ENCODE measurements at regions of chr13 and their contacts with region 1.

Region 1: DNA sequence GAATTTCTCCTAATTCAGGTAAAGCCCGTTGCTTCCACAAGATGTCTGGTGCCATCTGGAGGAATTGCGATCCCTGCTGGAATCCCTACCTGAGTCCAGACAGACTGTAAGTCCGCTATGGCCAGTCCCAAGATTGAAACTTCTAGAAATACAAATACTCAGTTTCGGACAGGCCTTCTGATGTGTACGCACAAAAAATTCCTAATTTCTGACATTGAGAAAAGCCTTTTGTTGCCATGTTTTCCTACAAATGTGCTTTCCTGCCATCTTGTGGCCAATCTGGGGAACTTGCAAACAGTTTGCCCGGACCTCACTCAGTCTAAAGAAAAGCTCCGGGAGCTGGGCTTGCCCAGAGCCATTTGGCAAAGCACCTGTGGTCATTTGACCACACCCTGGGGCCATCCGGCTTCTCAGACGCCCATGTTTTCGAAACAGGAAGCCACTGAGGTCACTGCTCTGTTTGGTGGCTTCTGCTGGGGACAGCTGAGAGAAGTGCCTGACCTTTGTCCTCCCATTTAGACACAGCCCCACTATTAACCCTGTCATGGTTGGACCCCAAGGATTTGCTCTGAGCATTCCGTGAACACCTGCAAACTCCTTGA is 79.4 kb downstream of the SLC15A1 start:
- DNase-seq: peak; percentile 13
- ATAC-seq: peak; percentile 96
- H3K4me3 ChIP-seq: no peak overlapping the region
- H3K27ac ChIP-seq: no peak overlapping the region
- H3K4me1 ChIP-seq: no peaks in the 10 kb centered on the region
- H3K27me3 ChIP-seq: no peaks in the 10 kb centered on the region; a peak in 1 of 4 replicates
- CTCF ChIP-seq: peak; percentile 85 to 90 (median 86)
- EP300 ChIP-seq: no peak
- POLR2A ChIP-seq: no peak
- RAD21 ChIP-seq: peak; percentile 88

Region 2: GRCh38 chr13:98033277-98034247 is 639.5 kb before region 1 on chr13:
- CTCF ChIA-PET with region 1: interaction called, 7 read pairs
- POLR2A ChIA-PET with region 1: no interaction called
- RAD21 ChIA-PET with region 1: interaction called, 3 read pairs
- SMC1A ChIA-PET with region 1: interaction called, 4 read pairs
- in situ Hi-C with region 1: no loop called
- intact Hi-C with region 1: loop called (anchors 10 kb)
- DNase-seq: no peak
- ATAC-seq: no peak
- H3K4me3 ChIP-seq: no peak overlapping the region
- H3K27ac ChIP-seq: no peak overlapping the region
- H3K4me1 ChIP-seq: no peaks in the 10 kb centered on the region
- H3K27me3 ChIP-seq: no peaks in the 10 kb centered on the region
- CTCF ChIP-seq: peak in 1 of 3 experiments; percentile 16; a peak in 1 of 6 replicates
- EP300 ChIP-seq: no peak
- POLR2A ChIP-seq: no peak
- RAD21 ChIP-seq: peak; percentile 45

Region 3: DNA sequence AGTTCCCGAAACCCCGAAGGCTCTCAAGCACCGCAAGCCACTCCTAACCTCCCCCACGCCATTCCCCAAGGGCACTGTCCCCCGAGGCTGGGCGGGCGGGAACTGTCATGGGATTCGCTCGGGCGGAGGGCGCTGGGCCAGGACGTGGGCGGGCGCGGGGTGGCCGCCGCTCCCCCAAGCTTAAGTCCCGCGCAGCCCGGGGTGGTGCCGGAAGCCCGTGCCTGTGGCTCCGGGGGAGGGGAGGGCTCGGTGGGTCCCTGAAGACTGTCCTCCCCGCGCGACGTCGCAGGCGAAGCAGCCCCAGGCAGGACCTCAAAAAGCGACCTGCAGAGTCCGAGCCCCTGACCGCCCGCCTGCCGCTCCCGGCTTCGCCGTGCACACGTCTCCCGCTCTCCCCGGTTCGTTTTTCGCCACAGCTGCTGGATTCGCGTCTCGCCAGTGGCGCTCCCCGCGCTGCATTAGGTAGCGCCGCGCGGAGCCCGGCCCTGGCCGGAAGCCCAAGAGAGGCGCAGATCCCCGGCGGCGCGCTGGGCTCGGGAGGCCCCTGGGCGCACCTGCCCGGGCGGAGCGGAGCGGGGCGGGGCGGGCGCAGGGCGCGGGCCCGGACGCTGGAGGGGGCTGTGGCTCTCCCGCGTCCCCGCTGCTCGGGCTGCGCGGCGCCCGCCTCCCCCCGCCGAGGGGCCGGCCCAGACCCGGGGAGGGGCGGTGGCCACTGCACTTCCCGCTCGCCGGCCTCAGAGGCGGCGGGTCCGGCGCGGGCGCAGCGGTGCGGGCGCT is 530.5 kb before region 1 on chr13 and contains the start of gene FARP1:
- CTCF ChIA-PET with region 1: no interaction called
- POLR2A ChIA-PET with region 1: no interaction called
- RAD21 ChIA-PET with region 1: no interaction called
- SMC1A ChIA-PET with region 1: no interaction called
- in situ Hi-C with region 1: no loop called
- intact Hi-C with region 1: loop called (anchors 10 kb)
- DNase-seq: no peak
- ATAC-seq: peak; percentile 89
- H3K4me3 ChIP-seq: peak within 1 kb of the TSS; percentile 60; the same call in 1 of the 2 replicates
- H3K27ac ChIP-seq: no peak within 1 kb of the TSS
- H3K4me1 ChIP-seq: no peaks in the 10 kb centered on the region
- H3K27me3 ChIP-seq: peaks cover 4 to 7% of the 10 kb centered on the region in 2 experiments; a peak in 3 of 4 replicates
- CTCF ChIP-seq: peak in 2 of 3 experiments; percentile 13 to 45; a peak in 3 of 6 replicates
- EP300 ChIP-seq: no peak
- POLR2A ChIP-seq: no peak
- RAD21 ChIP-seq: no peak
- polyA plus RNA-seq, gene FARP1: 0.20 to 0.52 TPM

Region 4: DNA sequence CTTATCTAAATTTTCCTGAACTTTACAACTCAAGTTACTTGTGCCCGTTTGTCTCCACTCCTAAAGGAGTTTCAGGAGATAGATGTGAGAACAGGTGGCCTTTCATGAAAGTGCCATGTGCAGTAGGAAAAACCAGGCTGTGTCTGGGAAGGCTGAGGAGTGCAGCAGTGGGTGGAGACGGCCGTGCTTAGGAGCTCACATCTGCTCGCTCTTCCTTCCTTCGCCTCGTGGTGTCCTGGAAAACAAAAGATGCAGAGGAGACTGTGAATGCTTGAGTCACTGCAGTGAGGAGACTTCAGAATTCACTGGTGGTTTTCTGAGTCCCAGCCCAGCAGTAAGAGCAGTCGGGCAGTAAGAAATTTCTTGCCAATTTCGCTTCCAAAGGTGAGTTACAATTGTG is 357.6 kb before region 1 on chr13:
- CTCF ChIA-PET with region 1: no interaction called
- POLR2A ChIA-PET with region 1: no interaction called
- RAD21 ChIA-PET with region 1: no interaction called
- SMC1A ChIA-PET with region 1: no interaction called
- in situ Hi-C with region 1: no loop called
- intact Hi-C with region 1: no loop called
- DNase-seq: no peak
- ATAC-seq: no peak
- H3K4me3 ChIP-seq: no peak overlapping the region
- H3K27ac ChIP-seq: no peak overlapping the region
- H3K4me1 ChIP-seq: no peaks in the 10 kb centered on the region
- H3K27me3 ChIP-seq: no peaks in the 10 kb centered on the region
- CTCF ChIP-seq: no peak
- EP300 ChIP-seq: no peak
- POLR2A ChIP-seq: no peak
- RAD21 ChIP-seq: no peak

Region 5: GRCh38 chr13:98445340-98446233 is 227.5 kb before region 1 on chr13:
- CTCF ChIA-PET with region 1: interaction called, 45 read pairs
- POLR2A ChIA-PET with region 1: no interaction called
- RAD21 ChIA-PET with region 1: interaction called, 12 read pairs
- SMC1A ChIA-PET with region 1: interaction called, 27 read pairs
- in situ Hi-C with region 1: no loop called
- intact Hi-C with region 1: loop called (anchors 1 kb)
- DNase-seq: peak; percentile 17
- ATAC-seq: peak; percentile 97
- H3K4me3 ChIP-seq: no peak overlapping the region
- H3K27ac ChIP-seq: peak overlapping the region; percentile 53
- H3K4me1 ChIP-seq: peaks cover 6% of the 10 kb centered on the region
- H3K27me3 ChIP-seq: no peaks in the 10 kb centered on the region
- CTCF ChIP-seq: peak; percentile 90 to 100 (median 98); a peak in 5 of 6 replicates
- EP300 ChIP-seq: no peak
- POLR2A ChIP-seq: no peak; the same call in 1 of the 2 replicates
- RAD21 ChIP-seq: peak; percentile 93

Region 6: GRCh38 chr13:98942997-98943396 is 270.0 kb after region 1 on chr13:
- CTCF ChIA-PET with region 1: no interaction called
- POLR2A ChIA-PET with region 1: no interaction called
- RAD21 ChIA-PET with region 1: no interaction called
- SMC1A ChIA-PET with region 1: no interaction called
- in situ Hi-C with region 1: no loop called
- intact Hi-C with region 1: no loop called
- DNase-seq: no peak
- ATAC-seq: no peak
- H3K4me3 ChIP-seq: no peak overlapping the region
- H3K27ac ChIP-seq: no peak overlapping the region
- H3K4me1 ChIP-seq: no peaks in the 10 kb centered on the region
- H3K27me3 ChIP-seq: no peaks in the 10 kb centered on the region
- CTCF ChIP-seq: no peak
- EP300 ChIP-seq: no peak
- POLR2A ChIP-seq: no peak
- RAD21 ChIP-seq: no peak

Measured in GM12878 (cell line).